HEK293 (cell line): ENCODE measurements at regions of chr19 and their contacts with region 1.

Region 1: DNA sequence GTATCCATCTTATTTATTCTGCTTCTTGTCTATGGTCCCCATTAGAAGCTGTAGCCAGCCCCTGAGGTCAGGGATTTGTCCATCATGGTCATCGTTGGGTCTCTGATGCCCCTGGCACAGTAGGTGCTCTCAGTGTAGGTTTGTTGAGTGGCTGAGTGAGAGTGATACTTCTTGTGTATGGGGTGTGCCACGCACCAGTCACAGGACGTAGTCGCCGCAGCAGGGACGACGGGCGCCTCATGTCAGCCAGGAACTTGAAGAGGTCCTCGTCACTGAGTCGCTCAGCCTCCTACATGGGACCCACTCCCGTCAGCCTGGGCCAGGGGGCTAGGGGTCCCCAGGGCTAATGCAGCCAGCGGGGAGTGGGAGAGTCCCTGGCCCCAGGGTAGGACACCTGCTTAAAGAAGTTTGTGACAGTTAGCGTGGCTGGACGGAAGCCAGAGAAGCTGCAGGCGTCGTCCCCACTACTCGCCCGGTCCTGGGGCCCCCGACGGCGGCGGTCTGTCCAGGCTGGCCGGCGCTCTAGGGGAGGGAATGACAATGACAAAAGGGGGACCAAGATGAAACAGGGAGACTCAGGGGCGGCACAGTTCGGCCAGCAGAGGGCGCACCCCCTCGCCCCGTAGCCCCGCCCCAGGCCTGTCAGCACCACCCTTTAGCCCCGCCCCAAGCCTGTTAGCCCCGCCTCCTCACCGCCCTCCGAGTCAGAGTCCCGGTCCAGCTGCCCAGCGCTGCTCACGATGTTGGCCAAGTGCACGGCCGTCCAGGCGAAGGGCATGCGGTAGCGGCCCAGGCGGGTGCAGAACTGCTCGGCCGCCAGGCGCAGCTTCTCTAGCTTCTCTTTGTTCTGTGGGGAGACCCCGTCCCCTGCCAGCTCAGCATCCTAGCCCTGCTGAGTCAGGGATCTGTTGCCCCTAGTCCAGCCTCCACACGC is 3.7 kb downstream of the ANGPTL8 start:
- H3K4me3 ChIP-seq: no peak overlapping the region
- H3K27ac ChIP-seq: no peak overlapping the region
- H3K4me1 ChIP-seq: no peaks in the 10 kb centered on the region
- CTCF ChIP-seq: peak; percentile 84

Region 2: DNA sequence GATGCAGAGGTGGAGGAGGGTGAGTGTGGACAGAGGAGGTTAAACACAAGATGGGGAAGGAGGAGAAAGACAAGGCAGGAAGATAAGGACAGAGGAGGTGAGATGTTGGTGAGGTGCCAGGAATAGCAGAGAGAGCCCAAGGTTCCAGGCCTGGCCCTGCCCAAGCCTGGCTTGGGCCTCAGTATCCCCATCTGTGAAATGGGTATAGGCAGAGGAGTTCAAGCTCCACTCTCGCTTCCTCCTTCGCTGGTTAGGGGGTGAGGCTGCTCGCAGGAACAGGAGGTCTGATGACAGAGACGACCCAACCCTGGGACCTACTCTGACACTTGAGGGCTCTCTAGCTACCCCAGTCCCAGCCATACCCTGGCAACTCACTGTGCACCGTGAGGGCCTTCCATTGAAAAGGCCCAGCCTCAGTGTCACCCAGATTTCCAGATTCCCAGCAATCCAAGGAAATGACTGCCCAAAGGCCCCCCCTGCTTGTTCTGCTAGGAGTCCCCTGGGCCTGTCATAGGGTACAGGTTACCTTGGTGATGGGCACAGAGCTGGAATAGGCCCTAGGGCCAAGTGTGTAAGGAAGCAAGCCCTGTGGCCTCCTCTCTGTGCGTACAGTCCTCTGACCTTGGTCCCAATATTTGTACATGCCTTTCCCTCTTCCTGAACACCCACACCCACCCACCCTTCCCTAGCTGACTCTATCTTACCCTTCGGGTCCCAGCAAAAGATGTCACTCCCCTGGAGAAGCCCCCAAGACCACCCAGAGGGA is 12.3 kb before region 1 on chr19:
- CTCF ChIA-PET with region 1: interaction called, 11 read pairs
- POLR2A ChIA-PET with region 1: interaction called, 3 read pairs
- H3K4me3 ChIP-seq: no peak overlapping the region
- H3K27ac ChIP-seq: no peak overlapping the region
- H3K4me1 ChIP-seq: no peaks in the 10 kb centered on the region
- CTCF ChIP-seq: no peak